Aorta (tissue), 5 donors: ENCODE measurements at regions of chr10 and their contacts with region 1.

Region 1: GRCh38 chr10:116385994-116386809 is 41.4 kb upstream of the PNLIPRP3 start:
- DNase-seq: no peak
- ATAC-seq: peak; percentile 50
- H3K4me3 ChIP-seq: no peak overlapping the region
- H3K27ac ChIP-seq: no peak overlapping the region
- H3K4me1 ChIP-seq: no peaks in the 10 kb centered on the region
- H3K27me3 ChIP-seq: no peaks in the 10 kb centered on the region

Region 2: GRCh38 chr10:115141254-115141653 is 1244.9 kb before region 1 on chr10:
- intact Hi-C with region 1: loop called in 1 of 2 experiments (anchors 10 kb)
- DNase-seq: no peak
- ATAC-seq: no peak
- H3K4me3 ChIP-seq: no peak overlapping the region
- H3K27ac ChIP-seq: no peak overlapping the region
- H3K4me1 ChIP-seq: no peaks in the 10 kb centered on the region
- H3K27me3 ChIP-seq: no peaks in the 10 kb centered on the region

Region 3: GRCh38 chr10:115171392-115171960 is 1214.7 kb before region 1 on chr10:
- intact Hi-C with region 1: loop called in 1 of 2 experiments (anchors 5 kb)
- DNase-seq: no peak
- ATAC-seq: no peak
- H3K4me3 ChIP-seq: no peak overlapping the region
- H3K27ac ChIP-seq: no peak overlapping the region
- H3K4me1 ChIP-seq: peaks cover 0 to 1% of the 10 kb centered on the region in 2 donors
- H3K27me3 ChIP-seq: no peaks in the 10 kb centered on the region

Region 4: GRCh38 chr10:115355162-115355760 is 1030.9 kb before region 1 on chr10:
- intact Hi-C with region 1: loop called (anchors 2 to 5 kb)
- DNase-seq: no peak
- ATAC-seq: no peak
- H3K4me3 ChIP-seq: no peak overlapping the region
- H3K27ac ChIP-seq: no peak overlapping the region
- H3K4me1 ChIP-seq: no peaks in the 10 kb centered on the region
- H3K27me3 ChIP-seq: no peaks in the 10 kb centered on the region

Region 5: DNA sequence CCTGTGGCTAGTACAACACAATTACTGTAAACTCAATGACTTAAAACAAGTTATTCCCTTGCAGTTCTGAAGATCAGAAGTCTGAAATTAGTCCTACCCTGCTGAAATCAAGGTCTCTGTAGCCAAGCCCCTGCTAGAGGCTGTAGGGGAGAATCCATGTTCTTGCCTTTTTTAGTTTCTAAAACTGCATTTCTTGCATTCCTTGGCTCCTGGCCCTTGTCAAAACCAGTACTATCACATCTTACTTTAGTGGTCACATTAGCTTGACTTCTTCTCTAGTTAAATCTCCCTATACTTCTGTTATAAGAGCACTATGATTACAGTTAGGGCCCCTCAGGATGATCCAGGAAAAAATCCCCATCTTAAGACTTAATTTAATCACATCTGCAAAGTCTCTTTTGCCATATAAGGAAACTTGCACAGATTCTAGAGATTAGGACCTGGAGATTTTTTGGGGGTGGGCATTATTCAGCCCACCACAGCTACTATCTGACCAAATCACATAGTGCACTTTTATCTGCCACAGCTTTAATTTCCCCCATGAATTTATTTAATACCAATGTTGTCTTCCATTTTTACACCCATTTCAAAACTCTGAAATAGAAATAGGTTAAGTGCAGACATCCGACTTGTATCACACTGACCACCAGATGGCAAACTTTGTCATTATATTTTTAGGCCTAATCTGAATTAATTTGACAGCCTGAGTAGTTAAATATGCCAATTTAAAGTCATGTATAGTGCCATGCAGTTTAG is 680.0 kb before region 1 on chr10:
- intact Hi-C with region 1: loop called in 1 of 2 experiments (anchors 10 kb)
- DNase-seq: no peak
- ATAC-seq: no peak
- H3K4me3 ChIP-seq: no peak overlapping the region
- H3K27ac ChIP-seq: no peak overlapping the region
- H3K4me1 ChIP-seq: no peaks in the 10 kb centered on the region
- H3K27me3 ChIP-seq: no peaks in the 10 kb centered on the region

Region 6: GRCh38 chr10:117096599-117097201 is 710.5 kb after region 1 on chr10:
- intact Hi-C with region 1: no loop called
- DNase-seq: no peak
- ATAC-seq: no peak
- H3K4me3 ChIP-seq: no peak overlapping the region
- H3K27ac ChIP-seq: no peak overlapping the region
- H3K4me1 ChIP-seq: no peaks in the 10 kb centered on the region
- H3K27me3 ChIP-seq: peaks cover 0 to under 1% of the 10 kb centered on the region in 2 donors